Uterus (tissue), 4 donors: ENCODE measurements at regions of chr11 and their contacts with region 1.

Region 1: DNA sequence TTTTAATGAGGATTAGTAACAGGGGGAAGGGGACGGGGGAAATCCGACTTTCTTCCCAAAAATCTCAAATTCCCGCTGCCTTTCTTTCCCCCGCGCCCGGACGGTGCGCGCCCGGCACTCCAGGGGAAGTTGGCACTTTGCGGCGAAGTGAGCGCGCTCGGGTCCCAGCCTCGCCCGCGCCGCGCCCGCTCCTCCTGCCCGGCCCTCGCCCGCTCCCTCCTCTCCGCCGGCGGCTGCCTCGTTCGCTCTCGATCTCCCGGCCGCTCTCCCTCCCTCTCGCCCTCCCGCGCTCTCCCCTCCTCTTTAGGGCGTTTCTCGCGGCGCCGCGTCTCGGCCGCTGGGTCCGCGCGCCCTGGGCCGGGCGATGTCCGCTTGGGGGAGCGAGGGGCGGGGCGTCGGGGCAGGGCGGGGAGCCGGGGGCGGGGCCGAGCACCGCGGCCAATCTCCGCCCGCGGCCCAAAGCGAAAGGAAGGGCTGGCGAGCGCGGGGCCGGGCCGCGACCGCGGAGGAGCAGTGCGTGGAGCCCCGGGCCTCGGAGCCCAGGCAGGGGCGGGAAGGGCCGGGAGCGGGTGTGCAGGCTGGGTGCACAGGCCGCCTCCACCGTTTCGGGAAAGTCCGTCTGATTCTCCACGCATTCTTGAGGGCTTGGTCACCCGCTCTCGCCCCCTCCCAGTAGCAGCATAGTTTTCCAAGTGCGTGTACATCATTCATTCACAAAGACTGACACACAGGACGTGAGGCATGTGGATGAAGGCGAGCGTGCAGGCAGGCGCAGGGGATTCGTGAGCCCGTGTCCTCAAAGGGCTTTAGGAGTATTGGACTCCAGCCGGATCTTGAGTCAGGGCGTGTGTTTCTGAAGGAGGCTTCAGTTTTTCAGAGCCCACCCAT is 65.1 kb downstream of the ETS1 start:
- DNase-seq: peak; percentile 92 to 94
- H3K4me3 ChIP-seq: peak overlapping the region; percentile 69
- H3K27ac ChIP-seq: peak overlapping the region; percentile 95 to 98
- H3K4me1 ChIP-seq: peaks cover 5 to 6% of the 10 kb centered on the region in 2 donors
- H3K27me3 ChIP-seq: no peaks in the 10 kb centered on the region
- CTCF ChIP-seq: no peak
- POLR2A ChIP-seq: peak; percentile 89 to 95

Region 2: GRCh38 chr11:128399251-128400121 is 122.8 kb before region 1 on chr11:
- intact Hi-C with region 1: loop called (anchors 10 kb)
- DNase-seq: no peak
- H3K4me3 ChIP-seq: no peak overlapping the region
- H3K27ac ChIP-seq: no peak overlapping the region
- H3K4me1 ChIP-seq: no peaks in the 10 kb centered on the region
- H3K27me3 ChIP-seq: no peaks in the 10 kb centered on the region
- CTCF ChIP-seq: no peak
- POLR2A ChIP-seq: no peak

Region 3: DNA sequence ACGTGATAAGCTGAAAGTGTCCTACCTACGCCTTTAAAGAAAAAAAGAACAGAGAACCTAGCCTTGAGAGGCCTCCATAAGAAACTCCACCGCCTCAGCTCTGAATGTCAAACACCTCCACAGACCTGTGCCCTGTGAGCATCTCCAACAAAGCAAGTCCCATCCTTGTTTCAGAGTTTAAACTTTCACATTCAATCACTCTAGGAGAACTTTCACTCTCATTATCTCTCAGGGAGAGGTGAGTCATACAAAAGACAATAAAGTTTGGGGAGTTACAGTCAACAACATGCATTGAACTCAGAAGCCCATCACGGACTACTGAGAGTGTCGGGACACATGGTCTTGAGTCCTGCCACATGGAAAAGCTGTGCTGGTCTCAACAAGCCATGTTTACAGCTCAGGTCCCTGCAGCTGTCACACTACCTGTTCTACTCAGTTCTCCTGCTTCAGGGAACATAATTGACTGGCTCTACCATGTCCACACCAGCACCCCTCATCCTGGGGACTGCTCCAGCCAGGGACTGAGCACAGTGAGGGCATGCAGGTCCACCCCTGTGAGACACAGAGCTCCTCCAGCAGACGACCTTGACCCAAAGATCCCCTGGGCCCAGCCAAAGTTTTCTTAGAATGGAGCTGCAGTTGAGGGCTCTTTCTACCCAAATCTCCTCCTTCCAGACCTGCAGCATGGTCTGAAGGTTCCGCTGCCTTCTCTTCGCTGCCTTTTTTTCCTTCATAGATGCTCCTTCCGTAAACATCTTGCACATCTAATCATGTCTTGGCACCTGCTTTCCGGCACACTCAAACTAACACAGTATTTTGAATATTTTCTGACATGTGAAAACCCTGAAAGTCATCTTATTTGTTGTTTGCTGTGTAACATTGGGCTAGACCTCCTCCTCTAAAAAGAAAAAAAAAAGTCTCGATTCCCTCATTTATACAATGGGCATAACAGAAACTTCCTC is 49.9 kb before region 1 on chr11:
- intact Hi-C with region 1: no loop called
- DNase-seq: no peak
- H3K4me3 ChIP-seq: no peak overlapping the region
- H3K27ac ChIP-seq: peak overlapping the region in 1 of 2 donors; percentile 0
- H3K4me1 ChIP-seq: peaks cover 0 to 10% of the 10 kb centered on the region in 2 donors
- H3K27me3 ChIP-seq: no peaks in the 10 kb centered on the region
- CTCF ChIP-seq: no peak
- POLR2A ChIP-seq: no peak

Region 4: GRCh38 chr11:128814856-128815705 is 292.8 kb after region 1 on chr11:
- intact Hi-C with region 1: no loop called
- DNase-seq: peak; percentile 68 to 69
- H3K4me3 ChIP-seq: no peak overlapping the region
- H3K27ac ChIP-seq: no peak overlapping the region
- H3K4me1 ChIP-seq: no peaks in the 10 kb centered on the region
- H3K27me3 ChIP-seq: no peaks in the 10 kb centered on the region
- CTCF ChIP-seq: no peak
- POLR2A ChIP-seq: no peak